ENCODE measurements at regions of chr13 and their contacts with region 1.

Region 1: DNA sequence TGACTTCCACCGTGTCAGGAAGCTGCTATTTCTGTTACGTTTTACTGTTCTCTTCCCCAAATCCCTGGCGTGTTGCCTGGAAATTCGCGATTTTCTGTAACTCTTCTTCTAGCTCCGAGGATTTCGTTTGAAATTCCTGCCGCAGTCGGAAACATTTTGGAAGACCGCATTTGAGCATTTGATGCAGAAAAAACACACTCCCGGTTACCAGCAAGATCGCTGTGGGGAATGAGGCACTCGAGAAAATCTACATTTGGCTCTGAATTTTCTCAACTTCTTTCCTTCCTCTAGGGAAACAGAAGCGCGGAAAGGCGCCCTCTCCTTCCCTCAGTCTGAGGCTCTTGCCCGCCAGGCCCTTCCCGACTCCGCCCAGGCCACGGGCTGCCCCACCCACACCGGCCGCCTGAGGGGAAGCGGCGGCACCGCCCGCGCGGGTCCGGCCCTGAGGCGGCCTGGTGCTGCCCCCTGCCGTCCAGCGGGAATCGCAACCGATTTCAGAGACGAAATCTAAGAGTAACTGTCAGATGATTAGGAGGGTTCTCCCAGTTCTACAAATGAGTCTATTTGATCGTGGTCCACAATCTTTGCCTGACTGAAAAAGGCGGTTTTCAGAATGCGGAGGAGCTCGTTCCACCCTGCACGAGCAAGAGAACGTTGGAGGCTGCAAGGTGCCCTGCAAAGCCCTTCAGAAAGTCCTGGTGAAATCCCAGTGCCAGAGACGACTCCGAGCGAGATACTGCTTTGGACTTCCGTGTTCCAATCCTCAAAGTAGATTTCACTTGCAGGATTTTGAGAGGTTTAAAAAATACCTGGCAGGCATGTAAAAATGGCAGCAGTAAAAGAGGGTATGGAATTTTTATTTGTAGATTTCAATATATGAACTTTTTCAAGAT is 18.4 kb upstream of the TUBGCP3 start:
- DNase-seq: no peak
- ATAC-seq: peak; percentile 100
- H3K4me3 ChIP-seq: peak overlapping the region; percentile 38; the same call in 1 of the 2 replicates
- H3K27ac ChIP-seq: no peak overlapping the region
- H3K4me1 ChIP-seq: no peaks in the 10 kb centered on the region
- H3K27me3 ChIP-seq: peaks cover 0 to 3% of the 10 kb centered on the region in 2 experiments; a peak in 1 of 4 replicates
- CTCF ChIP-seq: peak; percentile 88 to 98 (median 90); a peak in 5 of 6 replicates
- EP300 ChIP-seq: no peak
- POLR2A ChIP-seq: no peak
- RAD21 ChIP-seq: peak; percentile 91

Region 2: DNA sequence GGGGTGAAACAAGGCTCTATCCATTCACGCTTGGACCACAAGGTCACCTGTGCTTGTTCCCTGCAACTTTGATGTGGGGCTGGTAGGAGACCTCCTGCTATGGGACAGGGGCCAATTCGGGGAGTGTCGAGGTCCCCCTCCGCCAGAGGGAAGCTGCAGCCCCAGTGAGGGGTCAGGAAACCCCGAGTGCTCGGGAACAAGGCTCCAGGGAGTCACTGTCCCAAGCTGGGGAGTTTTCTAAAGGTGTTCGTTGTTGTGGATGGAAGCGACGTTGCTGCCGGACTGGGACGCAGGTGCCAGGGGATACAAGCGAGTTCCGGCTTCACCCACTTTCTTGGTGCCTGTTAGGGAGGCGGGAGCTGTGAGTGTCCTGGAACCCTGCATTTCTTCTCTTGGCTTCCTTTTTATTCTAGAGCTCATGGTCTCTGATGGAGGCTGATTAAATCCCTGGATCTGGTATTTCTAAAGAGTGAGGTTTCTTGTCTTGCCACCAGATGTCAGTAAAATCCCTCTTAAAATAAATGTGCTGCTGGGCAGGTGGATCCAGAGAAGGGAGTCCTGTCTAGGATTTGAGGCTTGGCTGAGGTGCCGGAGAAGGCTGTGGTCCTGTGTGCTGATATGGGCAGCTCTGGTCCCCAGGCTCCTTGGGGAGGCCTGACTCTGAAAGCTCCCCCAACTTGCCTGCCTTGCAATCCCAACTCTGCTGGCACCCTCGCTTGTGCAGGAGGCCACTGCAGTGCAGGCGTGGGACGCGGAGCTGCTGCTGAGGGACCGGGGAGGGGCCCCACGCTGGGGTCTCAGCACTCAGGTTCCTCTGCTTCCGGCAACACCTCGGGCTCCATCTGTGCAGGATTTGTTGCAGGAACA is 1132.0 kb before region 1 on chr13:
- CTCF ChIA-PET with region 1: interaction called, 7 read pairs
- POLR2A ChIA-PET with region 1: no interaction called
- RAD21 ChIA-PET with region 1: no interaction called
- SMC1A ChIA-PET with region 1: interaction called, 3 read pairs
- in situ Hi-C with region 1: loop called (anchors 5 kb)
- intact Hi-C with region 1: loop called (anchors 1 kb)
- DNase-seq: no peak
- ATAC-seq: peak; percentile 68
- H3K4me3 ChIP-seq: no peak overlapping the region
- H3K27ac ChIP-seq: no peak overlapping the region
- H3K4me1 ChIP-seq: no peaks in the 10 kb centered on the region
- H3K27me3 ChIP-seq: no peaks in the 10 kb centered on the region
- CTCF ChIP-seq: peak; percentile 39 to 51 (median 40); a peak in 5 of 6 replicates
- EP300 ChIP-seq: no peak
- POLR2A ChIP-seq: no peak
- RAD21 ChIP-seq: peak; percentile 75

Region 3: GRCh38 chr13:112079696-112080095 is 526.7 kb before region 1 on chr13:
- CTCF ChIA-PET with region 1: no interaction called
- POLR2A ChIA-PET with region 1: no interaction called
- RAD21 ChIA-PET with region 1: no interaction called
- SMC1A ChIA-PET with region 1: no interaction called
- in situ Hi-C with region 1: loop called (anchors 25 kb)
- intact Hi-C with region 1: no loop called
- DNase-seq: no peak
- ATAC-seq: no peak
- H3K4me3 ChIP-seq: no peak overlapping the region
- H3K27ac ChIP-seq: no peak overlapping the region
- H3K4me1 ChIP-seq: no peaks in the 10 kb centered on the region
- H3K27me3 ChIP-seq: no peaks in the 10 kb centered on the region
- CTCF ChIP-seq: no peak
- EP300 ChIP-seq: no peak
- POLR2A ChIP-seq: no peak
- RAD21 ChIP-seq: no peak

Region 4: DNA sequence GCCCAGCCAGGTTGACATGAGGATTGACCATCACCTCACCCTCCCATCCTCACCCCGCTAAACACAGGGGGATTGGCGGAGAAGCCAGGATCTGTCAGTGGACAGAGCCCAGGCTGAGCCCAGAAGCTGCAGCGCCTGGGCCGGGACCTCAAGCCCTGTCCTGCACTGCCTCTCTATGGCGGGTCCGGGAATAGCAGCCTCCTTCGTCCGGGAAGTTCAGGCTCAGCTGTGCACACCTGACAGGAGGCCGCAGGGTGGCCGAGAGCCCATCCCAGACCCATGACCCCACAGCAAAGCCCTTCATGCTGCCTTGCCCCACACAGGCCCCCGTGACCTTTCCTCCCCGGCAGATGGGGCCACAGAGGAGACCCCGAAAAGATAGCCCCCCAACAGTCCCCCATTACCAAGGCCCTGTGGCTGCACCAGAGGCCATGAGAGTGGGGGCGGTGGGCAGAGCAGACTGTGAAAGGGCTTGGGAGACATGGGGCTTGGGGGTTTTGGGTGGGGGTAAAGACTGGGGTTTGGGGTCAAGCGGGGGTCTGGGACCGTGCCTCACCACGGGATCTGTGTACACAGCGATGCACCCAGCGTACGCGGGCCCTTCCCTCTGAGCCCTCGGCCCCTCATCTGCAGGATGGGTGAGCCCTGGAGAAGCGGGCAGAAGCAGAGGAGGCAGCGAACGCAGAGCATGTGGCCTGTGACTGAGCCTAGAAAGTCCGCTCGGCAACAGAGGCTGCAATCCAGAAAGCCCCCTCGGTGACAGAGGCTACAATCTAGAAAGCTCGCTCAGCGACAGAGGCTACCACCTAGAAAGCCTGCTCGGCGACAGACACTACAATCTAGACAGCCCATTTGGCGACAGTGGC is 162.1 kb before region 1 on chr13:
- CTCF ChIA-PET with region 1: interaction called, 10 read pairs
- POLR2A ChIA-PET with region 1: no interaction called
- RAD21 ChIA-PET with region 1: no interaction called
- SMC1A ChIA-PET with region 1: interaction called, 4 read pairs
- in situ Hi-C with region 1: no loop called
- intact Hi-C with region 1: loop called (anchors 10 kb)
- DNase-seq: no peak
- ATAC-seq: peak; percentile 91
- H3K4me3 ChIP-seq: no peak overlapping the region
- H3K27ac ChIP-seq: no peak overlapping the region
- H3K4me1 ChIP-seq: no peaks in the 10 kb centered on the region
- H3K27me3 ChIP-seq: no peaks in the 10 kb centered on the region
- CTCF ChIP-seq: peak; percentile 78 to 93 (median 81)
- EP300 ChIP-seq: no peak
- POLR2A ChIP-seq: no peak
- RAD21 ChIP-seq: peak; percentile 79

Region 5: DNA sequence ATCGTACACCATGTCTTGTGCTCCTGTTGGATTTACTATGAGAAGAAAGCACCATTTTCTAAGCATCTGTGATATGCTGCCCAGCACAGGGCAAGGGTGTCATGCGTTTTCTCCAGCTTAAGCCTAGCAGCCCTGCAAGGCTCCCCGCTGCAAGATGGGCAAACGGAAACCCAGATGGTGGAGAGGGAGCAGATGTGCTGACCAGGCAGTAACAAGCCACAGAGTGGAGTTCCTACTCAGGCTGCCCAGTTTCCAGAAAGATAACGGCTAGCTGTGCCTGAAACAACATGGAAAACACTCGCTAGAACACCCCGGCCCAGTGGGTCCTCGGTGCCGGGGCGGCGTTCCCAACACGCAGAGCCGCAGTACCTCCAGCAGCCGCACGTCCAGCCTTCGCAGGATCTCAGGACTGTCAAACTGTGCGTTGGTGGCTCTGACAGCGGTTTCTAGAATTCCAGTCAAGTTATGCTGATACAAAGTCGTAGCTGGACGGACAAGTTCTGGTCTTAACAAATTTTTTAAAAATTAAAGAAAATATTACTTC is 86.8 kb before region 1 on chr13:
- CTCF ChIA-PET with region 1: interaction called, 7 read pairs
- POLR2A ChIA-PET with region 1: no interaction called
- RAD21 ChIA-PET with region 1: interaction called, 5 read pairs
- SMC1A ChIA-PET with region 1: interaction called, 3 read pairs
- in situ Hi-C with region 1: no loop called
- intact Hi-C with region 1: loop called (anchors 5 kb)
- DNase-seq: no peak
- ATAC-seq: no peak
- H3K4me3 ChIP-seq: no peak overlapping the region
- H3K27ac ChIP-seq: no peak overlapping the region
- H3K4me1 ChIP-seq: no peaks in the 10 kb centered on the region
- H3K27me3 ChIP-seq: no peaks in the 10 kb centered on the region
- CTCF ChIP-seq: no peak
- EP300 ChIP-seq: no peak
- POLR2A ChIP-seq: no peak
- RAD21 ChIP-seq: no peak

Measured in GM12878 (cell line).